ENCODE measurements at regions of chr6 and their contacts with region 1.

Region 1: GRCh38 chr6:167932468-167933276 is 64.8 kb upstream of the KIF25 start:
- DNase-seq: peak; percentile 49
- H3K4me3 Mint-ChIP-seq: peak overlapping the region; percentile 60
- H3K27ac Mint-ChIP-seq: peak overlapping the region; percentile 79
- H3K4me1 Mint-ChIP-seq: peaks cover 37% of the 10 kb centered on the region
- H3K27me3 Mint-ChIP-seq: no peaks in the 10 kb centered on the region
- CTCF ChIP-seq: no peak

Region 2: DNA sequence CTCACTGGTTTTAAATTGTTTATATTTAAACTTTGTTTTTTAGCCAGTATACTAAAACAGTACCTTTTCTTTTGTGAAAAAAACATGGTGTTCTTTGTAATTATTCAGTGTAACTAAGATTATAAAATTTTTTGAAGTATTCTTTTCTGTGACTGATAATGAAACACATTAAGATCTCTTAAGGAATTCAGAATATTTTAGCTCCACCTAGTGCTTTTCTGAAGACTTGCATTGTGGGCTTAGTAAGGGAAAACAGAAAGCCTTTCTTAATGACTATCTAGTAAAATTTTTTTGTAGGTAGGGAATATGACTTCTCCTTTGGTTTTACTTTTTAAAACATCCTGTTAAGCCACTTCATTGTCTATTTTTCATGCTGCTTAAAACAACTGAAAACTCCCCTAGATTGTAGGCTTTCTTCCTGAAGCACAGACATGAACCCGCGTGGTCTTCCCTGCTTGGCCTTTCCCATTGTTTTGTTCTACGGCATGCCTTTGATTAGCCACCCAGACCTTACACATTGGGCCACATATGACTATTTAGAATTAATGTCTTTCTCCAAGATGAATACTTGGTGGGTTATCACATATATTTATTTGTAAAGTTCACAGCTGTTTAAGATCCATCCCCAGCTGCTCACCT is 33.9 kb before region 1 on chr6:
- CTCF ChIA-PET with region 1: no interaction called
- intact Hi-C with region 1: no loop called
- DNase-seq: no peak
- H3K4me3 Mint-ChIP-seq: no peak overlapping the region
- H3K27ac Mint-ChIP-seq: no peak overlapping the region
- H3K4me1 Mint-ChIP-seq: peaks cover 5% of the 10 kb centered on the region
- H3K27me3 Mint-ChIP-seq: no peaks in the 10 kb centered on the region
- CTCF ChIP-seq: peak; percentile 45

Region 3: DNA sequence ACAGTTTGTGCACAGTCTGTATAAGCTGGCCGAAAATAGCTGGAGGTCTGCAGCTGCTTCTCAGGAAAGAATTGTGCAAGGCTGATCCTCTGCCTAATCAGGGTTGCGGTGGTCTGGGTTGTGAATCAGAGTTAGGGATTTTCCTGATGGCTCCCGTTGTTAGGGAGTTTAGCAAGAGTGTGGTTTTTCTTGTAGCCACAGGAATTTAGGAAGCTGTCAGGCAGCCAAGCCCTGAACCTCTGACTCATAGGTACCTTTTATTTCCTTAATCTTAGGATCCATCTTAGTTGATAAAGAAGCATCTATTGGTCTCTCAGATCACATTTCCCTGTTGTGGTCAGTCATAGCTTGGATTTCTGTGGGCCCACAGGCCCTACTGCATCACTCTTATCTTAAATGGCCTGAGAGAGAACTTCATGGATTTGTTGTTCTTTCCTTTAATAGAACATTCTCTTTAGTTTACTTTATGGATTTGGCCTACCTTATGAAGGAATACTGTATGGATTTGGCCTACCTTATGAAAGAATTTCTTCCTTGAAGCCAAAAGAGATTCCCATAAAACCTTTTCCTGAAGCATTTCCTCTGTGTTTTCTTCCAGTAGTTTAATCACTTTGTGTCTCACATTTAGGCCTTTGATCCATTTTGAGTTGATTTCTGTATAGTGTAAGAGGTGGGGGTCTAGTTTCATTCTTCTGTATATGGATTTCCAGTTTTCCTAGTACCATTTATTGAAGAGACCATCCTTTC is 75.1 kb after region 1 on chr6:
- CTCF ChIA-PET with region 1: no interaction called
- intact Hi-C with region 1: loop called (anchors 2 kb)
- DNase-seq: peak; percentile 85
- H3K4me3 Mint-ChIP-seq: no peak overlapping the region
- H3K27ac Mint-ChIP-seq: peak overlapping the region; percentile 50
- H3K4me1 Mint-ChIP-seq: peaks cover 11% of the 10 kb centered on the region
- H3K27me3 Mint-ChIP-seq: peaks cover 32% of the 10 kb centered on the region
- CTCF ChIP-seq: no peak

Measured in Calu3 (cell line).